ENCODE measurements at regions of chr7 and their contacts with region 1.

Region 1: DNA sequence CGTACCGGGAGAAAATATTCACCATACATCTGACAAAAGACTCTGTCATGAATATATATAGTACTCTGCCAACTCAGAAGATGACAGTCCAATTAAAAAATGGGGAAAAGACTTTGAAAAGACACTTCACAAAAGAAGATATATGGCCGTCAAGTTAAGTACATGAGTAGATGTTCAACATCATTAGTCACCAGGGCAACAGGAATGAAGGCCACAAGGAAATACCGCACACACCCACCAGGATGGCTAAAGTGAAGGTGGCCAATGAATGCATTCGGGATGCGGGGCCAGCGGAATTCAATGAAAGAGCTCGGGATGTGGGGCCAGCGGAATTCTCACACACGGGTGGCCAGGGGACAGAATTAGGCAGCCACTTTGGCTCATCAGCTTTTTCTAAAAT is 42.2 kb downstream of the MAD1L1 start:
- DNase-seq: no peak
- ATAC-seq: no peak
- H3K4me3 ChIP-seq: no peak overlapping the region
- H3K27ac ChIP-seq: no peak overlapping the region
- H3K4me1 ChIP-seq: peaks cover 16 to 20% of the 10 kb centered on the region in 2 donors
- H3K27me3 ChIP-seq: no peaks in the 10 kb centered on the region
- CTCF ChIP-seq: no peak
- POLR2A ChIP-seq: no peak

Region 2: DNA sequence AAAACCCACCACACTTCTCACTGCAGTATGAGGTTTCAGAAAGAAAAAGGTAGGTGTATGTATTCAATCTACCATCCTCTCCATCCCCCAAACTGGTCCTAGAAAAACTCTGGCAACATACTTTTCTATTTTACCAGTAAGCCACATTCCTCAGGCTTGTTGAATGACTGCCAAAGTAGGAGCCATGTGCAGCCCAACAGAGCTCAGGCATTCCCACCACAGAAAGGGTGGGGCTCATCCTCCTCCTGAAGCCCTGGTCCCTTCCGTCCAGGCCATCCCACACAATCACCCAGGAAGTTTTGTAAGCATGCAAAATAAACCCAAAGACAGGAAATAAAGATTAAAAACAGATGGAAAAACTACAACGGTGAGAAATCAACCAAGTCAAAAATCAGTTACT is 15.0 kb before region 1 on chr7:
- in situ Hi-C with region 1: no loop called
- intact Hi-C with region 1: loop called (anchors 2 kb)
- DNase-seq: peak in 1 of 2 donors; percentile 39
- ATAC-seq: peak in 1 of 2 donors; percentile 61
- H3K4me3 ChIP-seq: no peak overlapping the region
- H3K27ac ChIP-seq: peak overlapping the region in 3 of 4 donors; percentile 20 to 71 (median 69)
- H3K4me1 ChIP-seq: peaks cover 27 to 47% of the 10 kb centered on the region in 2 donors
- H3K27me3 ChIP-seq: no peaks in the 10 kb centered on the region
- CTCF ChIP-seq: no peak
- POLR2A ChIP-seq: no peak

Measured in gastrocnemius medialis (tissue), 4 donors.